Breast epithelium (tissue), 4 donors: ENCODE measurements at regions of chr12 and their contacts with region 1.

Region 1: DNA sequence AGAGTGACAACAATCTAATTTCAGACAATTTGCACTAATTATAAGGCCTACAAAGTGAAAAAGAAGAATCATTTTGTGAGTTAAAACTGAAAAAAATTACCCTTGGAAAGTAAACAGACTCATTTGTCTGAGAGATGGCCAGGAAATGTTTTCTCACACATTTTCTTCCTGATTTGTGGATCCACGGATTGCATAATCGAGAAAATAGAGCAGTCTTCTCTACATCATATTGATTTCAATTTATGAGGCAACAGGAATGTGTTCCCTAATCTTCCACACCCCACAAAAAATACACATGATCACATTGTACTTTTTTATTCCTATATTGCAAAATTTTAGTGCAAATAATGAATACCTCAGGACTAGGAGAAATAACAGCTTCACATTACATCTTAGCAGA is 160.8 kb downstream of the CCER1 start:
- DNase-seq: no peak
- H3K4me3 ChIP-seq: no peak overlapping the region
- H3K27ac ChIP-seq: no peak overlapping the region
- H3K4me1 ChIP-seq: no peaks in the 10 kb centered on the region
- H3K27me3 ChIP-seq: no peaks in the 10 kb centered on the region
- CTCF ChIP-seq: no peak
- POLR2A ChIP-seq: no peak

Region 2: GRCh38 chr12:90274407-90274806 is 519.8 kb before region 1 on chr12:
- intact Hi-C with region 1: loop called (anchors 10 kb)
- DNase-seq: no peak
- H3K4me3 ChIP-seq: no peak overlapping the region
- H3K27ac ChIP-seq: no peak overlapping the region
- H3K4me1 ChIP-seq: no peaks in the 10 kb centered on the region
- H3K27me3 ChIP-seq: no peaks in the 10 kb centered on the region
- CTCF ChIP-seq: no peak
- POLR2A ChIP-seq: no peak